ENCODE measurements at regions of chr15 and their contacts with region 1.

Region 1: GRCh38 chr15:40782580-40783227 is 12.9 kb downstream of the C15orf62 start:
- DNase-seq: peak in 2 of 5 donors; percentile 43 to 51
- ATAC-seq: peak in 3 of 4 donors; percentile 68 to 76 (median 75)
- H3K4me3 ChIP-seq: no peak overlapping the region
- H3K27ac ChIP-seq: no peak overlapping the region
- H3K4me1 ChIP-seq: peaks cover 0 to 16% (median 8%) of the 10 kb centered on the region in 12 donors
- H3K27me3 ChIP-seq: no peaks in the 10 kb centered on the region
- CTCF ChIP-seq: peak; percentile 16 to 59 (median 48)
- POLR2A ChIP-seq: no peak

Region 2: GRCh38 chr15:40307421-40308211 is 475.1 kb before region 1 on chr15 and contains the start of gene PLCB2:
- intact Hi-C with region 1: no loop called
- DNase-seq: peak; percentile 43 to 81 (median 52)
- ATAC-seq: peak; percentile 39 to 63 (median 57)
- H3K4me3 ChIP-seq: peak within 1 kb of the TSS in 10 of 12 donors; percentile 9 to 65 (median 33)
- H3K27ac ChIP-seq: peak within 1 kb of the TSS in 5 of 12 donors; percentile 54 to 95 (median 63)
- H3K4me1 ChIP-seq: peaks cover 0 to 25% (median 0%) of the 10 kb centered on the region in 12 donors
- H3K27me3 ChIP-seq: peaks cover 0 to 6% (median 0%) of the 10 kb centered on the region in 9 donors
- CTCF ChIP-seq: peak in 7 of 12 donors; percentile 4 to 38 (median 24)
- POLR2A ChIP-seq: no peak
- total RNA-seq, gene PLCB2: 1.6 to 46.2 (median 4.8) TPM

Region 3: DNA sequence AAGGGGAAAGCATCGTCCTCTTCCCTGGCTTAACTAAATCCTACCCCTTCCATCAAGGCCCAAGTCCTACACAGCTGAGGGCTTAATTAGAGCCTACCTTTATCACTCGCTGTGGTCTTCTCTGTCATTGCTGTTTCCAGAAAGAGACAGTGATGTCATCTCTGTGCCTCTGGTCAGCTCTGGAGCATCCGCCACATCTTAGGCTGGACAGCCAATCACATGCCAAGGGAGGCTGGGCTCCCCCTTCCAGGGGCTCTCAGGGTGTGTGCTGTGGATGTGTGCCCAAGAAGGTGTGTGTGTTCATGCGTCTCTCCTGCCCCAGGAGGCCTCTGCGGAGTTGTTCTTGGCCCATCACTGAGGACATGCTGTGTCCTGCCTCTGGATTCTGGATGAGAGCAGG is 269.1 kb before region 1 on chr15:
- intact Hi-C with region 1: loop called in 1 of 10 experiments (anchors 2 kb)
- DNase-seq: no peak
- ATAC-seq: no peak
- H3K4me3 ChIP-seq: no peak overlapping the region
- H3K27ac ChIP-seq: no peak overlapping the region
- H3K4me1 ChIP-seq: peaks cover 0 to 16% (median 10%) of the 10 kb centered on the region in 12 donors
- H3K27me3 ChIP-seq: peaks cover 0 to 27% (median 0%) of the 10 kb centered on the region in 9 donors
- CTCF ChIP-seq: no peak
- POLR2A ChIP-seq: no peak

Region 4: DNA sequence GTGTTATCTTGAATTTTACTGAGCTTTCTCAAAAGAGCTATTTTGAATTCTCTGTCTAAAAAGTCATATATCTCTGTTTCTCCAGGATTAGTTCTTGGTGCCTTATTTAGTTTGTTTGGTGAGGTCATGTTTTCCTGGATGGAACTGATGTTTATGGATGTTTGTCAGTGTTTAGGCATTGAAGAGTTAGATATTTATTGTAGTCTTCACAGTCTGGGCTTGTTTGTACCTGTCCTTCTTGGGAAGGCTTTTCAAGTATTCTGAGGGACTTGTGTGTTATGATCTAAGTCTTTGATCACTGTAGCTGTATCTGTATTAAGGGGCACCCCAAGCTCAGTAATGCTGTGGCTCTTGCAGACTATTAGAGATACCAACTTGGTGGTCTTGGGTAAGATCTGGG is 98.3 kb before region 1 on chr15:
- intact Hi-C with region 1: loop called in 2 of 10 experiments (anchors 2 to 5 kb)
- DNase-seq: no peak
- ATAC-seq: no peak
- H3K4me3 ChIP-seq: no peak overlapping the region
- H3K27ac ChIP-seq: no peak overlapping the region
- H3K4me1 ChIP-seq: no peaks in the 10 kb centered on the region
- H3K27me3 ChIP-seq: no peaks in the 10 kb centered on the region
- CTCF ChIP-seq: no peak
- POLR2A ChIP-seq: no peak

Region 5: DNA sequence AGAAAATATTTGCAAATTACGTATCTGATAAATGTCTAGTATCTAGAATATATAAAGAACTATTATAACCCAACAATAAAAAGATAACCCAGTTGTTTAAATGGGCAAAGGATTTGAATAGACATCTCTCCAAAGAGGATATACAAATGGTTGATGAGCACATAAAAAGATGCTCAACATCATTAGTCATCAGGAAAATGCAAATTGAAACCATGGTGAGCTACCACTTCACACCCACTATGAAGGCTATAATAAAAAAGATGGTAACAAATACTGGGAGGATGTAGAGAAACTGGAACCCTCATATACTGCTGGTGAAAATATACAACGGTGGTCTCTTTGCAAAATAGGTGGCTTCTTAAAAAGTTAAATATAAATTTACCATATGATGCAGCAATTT is 59.8 kb before region 1 on chr15:
- intact Hi-C with region 1: no loop called
- DNase-seq: no peak
- ATAC-seq: no peak
- H3K4me3 ChIP-seq: no peak overlapping the region
- H3K27ac ChIP-seq: no peak overlapping the region
- H3K4me1 ChIP-seq: no peaks in the 10 kb centered on the region
- H3K27me3 ChIP-seq: no peaks in the 10 kb centered on the region
- CTCF ChIP-seq: no peak
- POLR2A ChIP-seq: no peak

Region 6: GRCh38 chr15:40999190-40999589 is 216.5 kb after region 1 on chr15:
- intact Hi-C with region 1: no loop called
- DNase-seq: no peak
- ATAC-seq: no peak
- H3K4me3 ChIP-seq: no peak overlapping the region
- H3K27ac ChIP-seq: no peak overlapping the region
- H3K4me1 ChIP-seq: peaks cover 0 to 7% (median 0%) of the 10 kb centered on the region in 12 donors
- H3K27me3 ChIP-seq: no peaks in the 10 kb centered on the region
- CTCF ChIP-seq: no peak
- POLR2A ChIP-seq: no peak

Region 7: DNA sequence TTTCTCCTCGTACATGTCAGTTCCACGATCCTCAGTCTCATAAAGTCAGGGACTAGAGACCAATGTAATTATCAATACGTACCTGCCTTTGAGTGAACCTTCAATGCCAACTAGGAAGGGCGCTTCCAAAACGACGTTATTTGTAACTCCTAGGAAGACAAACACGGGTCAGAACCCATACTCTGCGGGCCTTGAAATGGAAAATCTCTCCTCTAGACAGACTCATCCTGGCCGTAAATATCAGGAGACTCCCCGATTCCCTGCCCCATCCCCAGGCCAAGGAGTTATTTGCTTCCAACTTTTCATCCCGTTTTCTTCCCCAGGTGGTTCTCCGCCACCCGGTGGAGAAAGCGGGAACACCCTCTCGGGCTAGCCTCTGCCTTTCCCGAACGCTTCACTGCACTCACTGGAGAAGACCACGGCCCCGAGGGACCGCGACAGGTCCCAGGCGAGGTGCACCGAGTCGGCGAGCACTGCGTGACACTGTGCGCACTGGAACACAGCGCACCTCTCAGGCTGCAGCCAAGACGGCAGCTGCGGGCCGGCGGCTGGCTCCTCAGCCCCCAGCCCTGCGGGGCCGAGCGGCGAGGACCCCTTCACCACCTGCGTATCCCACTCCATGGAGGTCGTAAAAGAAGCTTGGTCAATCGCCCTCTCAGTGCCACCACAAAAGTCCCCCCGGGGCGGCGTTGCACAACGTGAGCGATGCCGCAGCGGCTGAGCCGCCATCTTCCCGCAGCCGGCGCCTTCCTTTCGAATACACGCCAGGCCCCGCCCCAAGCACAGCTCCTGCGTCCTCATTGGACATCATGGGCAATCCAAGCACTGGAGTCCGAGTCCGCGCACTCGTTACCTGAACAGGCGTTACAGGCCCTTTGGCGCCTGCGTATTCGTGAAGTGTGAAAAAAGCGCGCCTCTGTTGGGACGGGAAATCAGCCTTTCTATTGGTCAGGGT is 549.4 kb after region 1 on chr15 and contains the start of gene OIP5:
- intact Hi-C with region 1: no loop called
- DNase-seq: peak; percentile 95 to 99 (median 98)
- ATAC-seq: peak; percentile 99 to 100 (median 100)
- H3K4me3 ChIP-seq: peak within 1 kb of the TSS; percentile 67 to 98 (median 84)
- H3K27ac ChIP-seq: peak within 1 kb of the TSS in 9 of 12 donors; percentile 14 to 76 (median 59)
- H3K4me1 ChIP-seq: peaks cover 0 to 27% (median 9%) of the 10 kb centered on the region in 12 donors
- H3K27me3 ChIP-seq: no peaks in the 10 kb centered on the region
- CTCF ChIP-seq: peak; percentile 36 to 77 (median 62)
- POLR2A ChIP-seq: no peak
- total RNA-seq, gene OIP5: 0.22 to 1.3 (median 0.72) TPM in 7 of 9 donors, not detected in the others